Aorta (tissue), 5 donors: ENCODE measurements at regions of chr16 and their contacts with region 1.

Region 1: GRCh38 chr16:75622761-75623605 is at the start of gene ADAT1:
- DNase-seq: peak; percentile 99 to 100
- ATAC-seq: peak; percentile 97
- H3K4me3 ChIP-seq: peak within 1 kb of the TSS; percentile 46 to 51
- H3K27ac ChIP-seq: peak within 1 kb of the TSS; percentile 40 to 73
- H3K4me1 ChIP-seq: peaks cover 0 to 3% of the 10 kb centered on the region in 2 donors
- H3K27me3 ChIP-seq: no peaks in the 10 kb centered on the region
- total RNA-seq, gene ADAT1: 25.4 to 44.0 TPM

Region 2: GRCh38 chr16:75471723-75472633 is 151.0 kb before region 1 on chr16:
- intact Hi-C with region 1: loop called (anchors 1 to 10 kb)
- DNase-seq: peak in 1 of 2 donors; percentile 54
- ATAC-seq: peak; percentile 93
- H3K4me3 ChIP-seq: no peak overlapping the region
- H3K27ac ChIP-seq: no peak overlapping the region
- H3K4me1 ChIP-seq: no peaks in the 10 kb centered on the region
- H3K27me3 ChIP-seq: no peaks in the 10 kb centered on the region

Region 3: GRCh38 chr16:75566040-75566810 is 56.8 kb before region 1 on chr16 and contains the start of gene GABARAPL2:
- intact Hi-C with region 1: loop called (anchors 5 kb)
- DNase-seq: peak; percentile 88 to 94
- ATAC-seq: peak; percentile 95
- H3K4me3 ChIP-seq: peak within 1 kb of the TSS; percentile 85 to 92
- H3K27ac ChIP-seq: peak within 1 kb of the TSS in 1 of 2 donors; percentile 16
- H3K4me1 ChIP-seq: peaks cover 0 to 7% of the 10 kb centered on the region in 2 donors
- H3K27me3 ChIP-seq: no peaks in the 10 kb centered on the region
- total RNA-seq, gene GABARAPL2: 106 to 154 TPM

Region 4: DNA sequence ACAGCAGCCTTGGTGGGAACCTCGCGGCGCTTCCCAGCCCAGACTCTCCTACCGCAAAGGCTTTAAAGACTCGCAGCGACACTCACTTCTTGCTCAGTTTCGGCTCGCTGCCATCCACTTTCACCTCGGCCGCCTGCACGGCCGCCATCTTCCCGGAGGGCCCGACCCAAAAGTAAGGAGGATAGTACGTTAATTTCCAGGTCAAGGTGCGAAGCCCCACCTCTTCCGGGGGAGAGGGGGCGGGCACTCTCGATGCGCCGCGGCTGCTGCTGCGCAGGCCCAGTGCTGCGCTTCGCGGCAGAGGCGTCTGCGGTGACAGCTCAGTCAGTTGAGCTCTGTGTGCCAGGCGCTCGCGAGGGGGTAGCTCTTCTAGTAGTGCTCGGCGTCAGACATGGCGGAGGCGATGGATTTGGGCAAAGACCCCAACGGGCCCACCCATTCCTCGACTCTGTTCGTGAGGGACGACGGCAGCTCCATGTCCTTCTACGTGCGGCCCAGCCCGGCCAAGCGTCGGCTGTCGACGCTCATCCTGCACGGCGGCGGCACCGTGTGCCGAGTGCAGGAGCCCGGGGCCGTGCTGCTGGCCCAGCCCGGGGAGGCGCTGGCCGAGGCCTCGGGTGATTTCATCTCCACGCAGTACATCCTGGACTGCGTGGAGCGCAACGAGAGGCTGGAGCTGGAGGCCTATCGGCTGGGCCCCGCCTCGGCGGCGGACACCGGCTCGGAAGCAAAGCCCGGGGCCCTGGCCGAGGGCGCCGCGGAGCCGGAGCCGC is 24.7 kb after region 1 on chr16 and contains the starts of genes KARS1 and TERF2IP:
- intact Hi-C with region 1: loop called in 1 of 2 experiments (anchors 1 kb)
- DNase-seq: peak; percentile 96 to 97
- ATAC-seq: peak; percentile 97
- H3K4me3 ChIP-seq: peak within 1 kb of the TSS; percentile 93 to 100
- H3K27ac ChIP-seq: peak within 1 kb of the TSS; percentile 70 to 97
- H3K4me1 ChIP-seq: peaks cover 3 to 5% of the 10 kb centered on the region in 2 donors
- H3K27me3 ChIP-seq: no peaks in the 10 kb centered on the region
- total RNA-seq, gene KARS1: 60.4 to 69.8 TPM
- total RNA-seq, gene TERF2IP: 59.5 to 66.3 TPM

Region 5: GRCh38 chr16:75745823-75746222 is 122.8 kb after region 1 on chr16:
- intact Hi-C with region 1: no loop called
- DNase-seq: no peak
- ATAC-seq: no peak
- H3K4me3 ChIP-seq: no peak overlapping the region
- H3K27ac ChIP-seq: no peak overlapping the region
- H3K4me1 ChIP-seq: no peaks in the 10 kb centered on the region
- H3K27me3 ChIP-seq: no peaks in the 10 kb centered on the region